Naive thymus-derived CD4-positive, alpha-beta T cell (primary cell): ENCODE measurements at regions of chr12 and their contacts with region 1.

Region 1: DNA sequence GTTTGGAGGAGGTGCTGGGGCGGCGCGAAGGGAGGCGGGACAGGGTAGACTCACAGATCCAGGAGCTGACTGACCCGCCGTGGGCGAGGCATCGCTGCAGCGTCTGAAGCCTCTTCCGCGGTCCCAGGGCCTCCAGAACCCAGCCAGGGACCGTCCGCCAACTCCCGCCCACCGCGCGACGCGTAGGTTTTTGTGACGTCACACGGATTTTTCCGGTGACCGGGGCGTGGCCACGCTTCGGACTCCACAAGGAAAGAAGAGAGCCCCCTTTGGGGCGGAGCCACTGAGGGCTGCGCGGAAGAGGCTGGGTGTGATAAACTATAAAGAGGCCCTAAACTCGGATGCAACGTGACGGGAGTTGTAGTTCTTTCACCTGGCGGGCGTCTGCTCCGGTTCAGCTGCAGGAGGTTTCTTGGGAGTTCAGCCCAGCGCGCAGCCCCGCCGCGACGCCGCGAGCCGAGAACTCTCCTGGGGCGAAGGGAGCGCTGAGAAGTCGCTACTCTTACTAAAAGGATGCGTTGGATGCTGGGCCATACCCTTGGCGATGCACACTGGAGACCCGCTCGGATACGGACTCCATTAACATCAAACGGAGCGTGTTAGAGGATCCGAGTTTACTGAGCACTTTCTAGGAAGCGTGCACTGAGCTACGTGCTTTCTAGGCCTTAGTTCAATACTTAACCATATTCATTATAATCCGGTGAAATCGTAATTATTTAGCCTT is at the start of gene AMN1:
- DNase-seq: peak; percentile 94 to 100 (median 95)
- ATAC-seq: peak; percentile 94
- H3K4me3 ChIP-seq: peak within 1 kb of the TSS; percentile 84
- H3K4me3 Mint-ChIP-seq: peak within 1 kb of the TSS; percentile 94 to 100 (median 98)
- H3K27ac ChIP-seq: peak within 1 kb of the TSS; percentile 86
- H3K27ac Mint-ChIP-seq: peak within 1 kb of the TSS; percentile 96 to 100 (median 99)
- H3K4me1 ChIP-seq: peaks cover 8 to 18% of the 10 kb centered on the region in 2 donors
- H3K4me1 Mint-ChIP-seq: peaks cover 26 to 79% (median 61%) of the 10 kb centered on the region in 7 donors
- H3K27me3 ChIP-seq: no peaks in the 10 kb centered on the region
- H3K27me3 Mint-ChIP-seq: peaks cover 0 to 2% (median 0%) of the 10 kb centered on the region in 5 donors
- total RNA-seq, gene AMN1: 4.1 to 22.9 (median 8.1) TPM

Region 2: GRCh38 chr12:31659087-31659933 is 69.8 kb before region 1 on chr12 and contains the start of gene ETFBKMT:
- CTCF ChIA-PET with region 1: no interaction called
- POLR2A ChIA-PET with region 1: interaction called, 8 read pairs
- intact Hi-C with region 1: loop called (anchors 1 kb)
- DNase-seq: peak; percentile 85 to 95 (median 93)
- ATAC-seq: peak; percentile 99
- H3K4me3 ChIP-seq: peak within 1 kb of the TSS; percentile 85
- H3K4me3 Mint-ChIP-seq: peak within 1 kb of the TSS; percentile 81 to 99 (median 96)
- H3K27ac ChIP-seq: peak within 1 kb of the TSS; percentile 90
- H3K27ac Mint-ChIP-seq: peak within 1 kb of the TSS; percentile 91 to 100 (median 97)
- H3K4me1 ChIP-seq: peaks cover 0 to 10% of the 10 kb centered on the region in 2 donors
- H3K4me1 Mint-ChIP-seq: peaks cover 3 to 36% (median 24%) of the 10 kb centered on the region in 7 donors
- H3K27me3 ChIP-seq: no peaks in the 10 kb centered on the region
- H3K27me3 Mint-ChIP-seq: no peaks in the 10 kb centered on the region
- total RNA-seq, gene ETFBKMT: 0.92 to 2.0 (median 1.9) TPM

Region 3: DNA sequence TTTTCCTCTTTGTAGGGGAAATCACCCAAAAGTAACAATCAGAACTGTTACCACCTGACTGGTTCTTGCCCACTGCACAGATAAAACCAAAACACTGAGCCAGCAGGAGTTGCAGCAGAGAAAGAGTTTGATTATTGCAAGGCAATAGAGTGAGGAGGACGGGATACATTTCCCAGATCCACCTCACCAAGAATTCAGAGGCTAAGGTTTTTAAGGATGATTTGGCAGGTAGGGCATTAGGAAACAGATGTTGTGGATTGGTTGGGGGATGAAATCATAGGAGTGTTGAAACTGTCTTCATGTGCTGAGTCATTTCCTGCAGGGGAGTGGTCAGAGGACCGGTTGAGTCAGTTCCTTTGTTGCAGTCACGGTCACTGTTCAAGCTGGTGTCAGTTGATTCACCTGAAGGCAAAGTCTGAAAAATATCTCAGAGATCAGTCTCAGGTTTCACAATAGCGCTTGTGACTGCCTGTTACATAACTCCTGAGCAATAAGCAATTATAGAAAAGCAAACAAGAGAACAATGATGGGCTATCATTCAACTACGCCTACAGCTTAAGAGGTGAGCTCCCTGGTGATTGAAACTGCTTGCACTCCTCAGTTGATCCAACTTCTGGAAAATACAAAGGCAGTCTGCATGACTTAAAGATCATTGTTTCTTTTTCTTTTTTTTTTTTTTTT is 20.1 kb after region 1 on chr12:
- CTCF ChIA-PET with region 1: interaction called, 3 read pairs
- POLR2A ChIA-PET with region 1: interaction called, 10 read pairs
- intact Hi-C with region 1: loop called in 1 of 2 experiments (anchors 1 kb)
- DNase-seq: peak in 1 of 9 donors; percentile 57
- ATAC-seq: peak; percentile 89
- H3K4me3 ChIP-seq: peak overlapping the region; percentile 34
- H3K4me3 Mint-ChIP-seq: peak overlapping the region in 7 of 10 donors; percentile 21 to 66 (median 38)
- H3K27ac ChIP-seq: no peak overlapping the region
- H3K27ac Mint-ChIP-seq: peak overlapping the region in 8 of 9 donors; percentile 14 to 83 (median 63)
- H3K4me1 ChIP-seq: peaks cover 18 to 20% of the 10 kb centered on the region in 2 donors
- H3K4me1 Mint-ChIP-seq: peaks cover 31 to 76% (median 65%) of the 10 kb centered on the region in 7 donors
- H3K27me3 ChIP-seq: no peaks in the 10 kb centered on the region
- H3K27me3 Mint-ChIP-seq: no peaks in the 10 kb centered on the region

Region 4: DNA sequence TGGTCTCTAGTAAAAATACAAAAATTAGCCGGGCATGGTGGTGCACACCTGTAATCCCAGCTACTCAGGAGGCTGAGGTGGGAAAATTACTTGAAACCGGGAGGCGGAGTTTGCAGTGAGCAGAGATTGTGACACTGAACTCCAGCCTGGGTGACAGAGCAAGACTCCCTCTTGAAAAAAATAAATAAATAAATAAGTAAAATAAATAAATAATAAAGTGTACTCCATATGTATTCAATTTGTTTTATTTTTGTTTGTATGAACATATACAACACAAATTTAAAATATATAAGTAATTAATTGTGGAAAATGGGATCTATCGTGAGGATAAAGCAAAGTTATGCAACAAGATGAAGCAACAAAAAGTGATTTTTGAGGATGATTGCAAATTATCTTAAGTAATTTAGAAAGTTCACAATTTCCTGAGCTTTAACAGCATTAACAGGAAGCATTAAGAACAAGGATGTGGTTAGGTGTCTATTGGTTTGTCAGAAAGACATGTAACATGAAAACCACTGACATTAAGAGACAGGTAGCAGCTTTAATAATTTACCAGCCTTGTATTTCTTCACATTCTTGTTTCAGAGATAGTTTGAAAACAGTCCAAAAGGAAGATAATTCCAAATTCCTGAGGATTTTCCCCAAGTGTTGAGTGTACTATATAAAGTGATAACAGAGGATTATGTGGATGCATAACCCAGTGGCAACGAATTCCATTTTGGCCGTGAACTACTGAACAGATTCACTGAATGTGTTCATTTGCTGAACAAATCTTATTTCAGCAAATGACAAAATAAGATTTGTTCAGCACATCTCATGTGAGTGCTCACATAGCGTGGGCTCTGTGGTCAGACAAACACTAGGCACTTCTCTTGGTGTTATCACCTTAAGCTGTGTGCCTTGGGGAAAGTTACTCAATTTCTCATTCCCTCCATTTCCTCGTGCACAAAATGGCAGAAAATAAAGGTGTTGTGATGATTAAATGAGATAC is 161.5 kb after region 1 on chr12:
- CTCF ChIA-PET with region 1: interaction called, 5 read pairs
- POLR2A ChIA-PET with region 1: interaction called, 25 read pairs
- intact Hi-C with region 1: no loop called
- DNase-seq: peak in 7 of 9 donors; percentile 30 to 77 (median 74)
- ATAC-seq: peak; percentile 87
- H3K4me3 ChIP-seq: peak overlapping the region; percentile 2
- H3K4me3 Mint-ChIP-seq: peak overlapping the region; percentile 51 to 82 (median 72)
- H3K27ac ChIP-seq: peak overlapping the region; percentile 56
- H3K27ac Mint-ChIP-seq: peak overlapping the region; percentile 83 to 98 (median 90)
- H3K4me1 ChIP-seq: peaks cover 40 to 66% of the 10 kb centered on the region in 2 donors
- H3K4me1 Mint-ChIP-seq: peaks cover 22 to 80% (median 60%) of the 10 kb centered on the region in 7 donors
- H3K27me3 ChIP-seq: no peaks in the 10 kb centered on the region
- H3K27me3 Mint-ChIP-seq: no peaks in the 10 kb centered on the region

Region 5: DNA sequence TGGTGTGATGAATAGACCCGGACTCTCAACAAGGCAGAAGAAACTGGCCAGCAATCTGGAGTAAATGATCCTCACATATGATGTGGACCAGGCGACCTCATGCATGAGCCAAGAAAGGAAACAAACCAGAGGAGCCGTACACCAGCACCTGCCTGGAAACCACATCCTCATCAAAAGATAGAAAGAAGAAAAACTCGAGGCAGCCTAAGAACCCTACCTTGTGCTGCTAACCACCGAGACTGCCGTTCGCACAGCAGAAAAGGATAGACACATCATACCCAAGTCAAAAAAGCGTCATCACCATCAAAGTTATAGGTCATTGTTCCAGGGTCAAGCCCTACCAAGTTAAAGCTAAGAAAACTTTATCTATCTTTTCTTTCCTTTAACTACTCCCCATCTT is 296.8 kb after region 1 on chr12:
- CTCF ChIA-PET with region 1: no interaction called
- POLR2A ChIA-PET with region 1: no interaction called
- intact Hi-C with region 1: loop called in 1 of 2 experiments (anchors 1 kb)
- DNase-seq: peak; percentile 7 to 87 (median 78)
- ATAC-seq: peak; percentile 94
- H3K4me3 ChIP-seq: no peak overlapping the region
- H3K4me3 Mint-ChIP-seq: peak overlapping the region; percentile 14 to 64 (median 40)
- H3K27ac ChIP-seq: peak overlapping the region; percentile 26
- H3K27ac Mint-ChIP-seq: peak overlapping the region; percentile 57 to 92 (median 79)
- H3K4me1 ChIP-seq: peaks cover 12 to 24% of the 10 kb centered on the region in 2 donors
- H3K4me1 Mint-ChIP-seq: peaks cover 9 to 51% (median 37%) of the 10 kb centered on the region in 7 donors
- H3K27me3 ChIP-seq: no peaks in the 10 kb centered on the region
- H3K27me3 Mint-ChIP-seq: no peaks in the 10 kb centered on the region

Region 6: GRCh38 chr12:32039347-32039746 is 310.3 kb after region 1 on chr12:
- CTCF ChIA-PET with region 1: no interaction called
- POLR2A ChIA-PET with region 1: no interaction called
- intact Hi-C with region 1: no loop called
- DNase-seq: no peak
- ATAC-seq: no peak
- H3K4me3 ChIP-seq: no peak overlapping the region
- H3K4me3 Mint-ChIP-seq: no peak overlapping the region
- H3K27ac ChIP-seq: no peak overlapping the region
- H3K27ac Mint-ChIP-seq: no peak overlapping the region
- H3K4me1 ChIP-seq: no peaks in the 10 kb centered on the region
- H3K4me1 Mint-ChIP-seq: peaks cover 0 to 2% (median 0%) of the 10 kb centered on the region in 7 donors
- H3K27me3 ChIP-seq: no peaks in the 10 kb centered on the region
- H3K27me3 Mint-ChIP-seq: no peaks in the 10 kb centered on the region